SK-N-SH (cell line): ENCODE measurements at regions of chr17 and their contacts with region 1.

Region 1: GRCh38 chr17:74176546-74177001 is 26.9 kb upstream of the RPL38 start:
- DNase-seq: peak; percentile 91
- H3K4me3 ChIP-seq: peak overlapping the region in 1 of 2 experiments; percentile 18; a peak in 1 of 4 replicates
- H3K27ac ChIP-seq: no peak overlapping the region
- H3K4me1 ChIP-seq: peaks cover 0 to 10% of the 10 kb centered on the region in 2 experiments; a peak in 1 of 4 replicates
- H3K27me3 ChIP-seq: no peaks in the 10 kb centered on the region
- CTCF ChIP-seq: peak; percentile 94
- EP300 ChIP-seq: no peak
- RAD21 ChIP-seq: peak; percentile 100

Region 2: DNA sequence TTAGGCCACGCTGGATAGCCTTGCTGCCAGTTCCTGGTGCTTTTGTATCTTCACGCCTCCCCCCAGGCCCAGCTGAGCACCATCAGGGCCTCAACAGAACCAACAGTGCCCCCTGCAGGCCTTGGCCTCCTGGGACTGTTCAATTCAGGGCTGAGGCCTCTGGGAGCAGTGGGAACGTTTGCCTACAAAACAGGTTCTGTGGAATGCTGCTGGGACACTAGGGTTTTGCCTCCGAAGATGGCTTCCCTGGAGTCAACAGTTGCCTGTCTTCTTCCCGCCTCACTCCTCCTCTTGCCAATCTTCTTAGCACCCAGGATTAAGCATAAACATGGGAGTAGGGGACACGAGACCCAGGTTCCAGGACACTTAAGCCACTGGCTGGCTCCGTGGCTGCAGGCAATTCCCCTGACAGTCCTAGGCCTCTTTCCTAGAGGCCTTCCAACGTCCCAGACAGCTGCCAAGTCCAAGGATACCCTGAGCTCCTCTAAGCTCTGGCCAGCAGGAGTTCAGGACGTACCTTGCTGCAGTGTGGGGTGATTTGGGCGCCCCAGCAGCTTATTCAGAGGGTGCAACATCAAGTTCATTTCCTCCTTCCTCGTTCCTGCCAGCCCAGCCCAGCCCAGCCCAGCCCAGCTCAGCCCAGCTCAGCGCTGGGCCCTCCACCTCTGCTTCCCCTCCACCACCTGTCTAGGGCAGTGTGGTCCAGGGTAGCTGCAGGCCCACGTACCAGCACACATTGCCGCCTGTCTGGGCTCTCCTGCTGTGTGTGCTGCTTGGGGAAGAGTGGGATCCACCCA is 219.7 kb before region 1 on chr17:
- CTCF ChIA-PET with region 1: interaction called, 18 read pairs
- POLR2A ChIA-PET with region 1: no interaction called
- DNase-seq: peak; percentile 89
- H3K4me3 ChIP-seq: no peak overlapping the region
- H3K27ac ChIP-seq: no peak overlapping the region
- H3K4me1 ChIP-seq: peaks cover 0 to 6% of the 10 kb centered on the region in 2 experiments; a peak in 1 of 4 replicates
- H3K27me3 ChIP-seq: no peaks in the 10 kb centered on the region
- CTCF ChIP-seq: no peak; the same call in 1 of the 2 replicates
- EP300 ChIP-seq: no peak
- RAD21 ChIP-seq: peak; percentile 82

Region 3: GRCh38 chr17:74008196-74008595 is 168.4 kb before region 1 on chr17:
- CTCF ChIA-PET with region 1: interaction called, 15 read pairs
- POLR2A ChIA-PET with region 1: interaction called, 3 read pairs
- DNase-seq: peak; percentile 75
- H3K4me3 ChIP-seq: no peak overlapping the region
- H3K27ac ChIP-seq: no peak overlapping the region
- H3K4me1 ChIP-seq: peaks cover 0 to 22% of the 10 kb centered on the region in 2 experiments; a peak in 1 of 4 replicates
- H3K27me3 ChIP-seq: no peaks in the 10 kb centered on the region
- CTCF ChIP-seq: no peak
- EP300 ChIP-seq: no peak
- RAD21 ChIP-seq: peak; percentile 53

Region 4: DNA sequence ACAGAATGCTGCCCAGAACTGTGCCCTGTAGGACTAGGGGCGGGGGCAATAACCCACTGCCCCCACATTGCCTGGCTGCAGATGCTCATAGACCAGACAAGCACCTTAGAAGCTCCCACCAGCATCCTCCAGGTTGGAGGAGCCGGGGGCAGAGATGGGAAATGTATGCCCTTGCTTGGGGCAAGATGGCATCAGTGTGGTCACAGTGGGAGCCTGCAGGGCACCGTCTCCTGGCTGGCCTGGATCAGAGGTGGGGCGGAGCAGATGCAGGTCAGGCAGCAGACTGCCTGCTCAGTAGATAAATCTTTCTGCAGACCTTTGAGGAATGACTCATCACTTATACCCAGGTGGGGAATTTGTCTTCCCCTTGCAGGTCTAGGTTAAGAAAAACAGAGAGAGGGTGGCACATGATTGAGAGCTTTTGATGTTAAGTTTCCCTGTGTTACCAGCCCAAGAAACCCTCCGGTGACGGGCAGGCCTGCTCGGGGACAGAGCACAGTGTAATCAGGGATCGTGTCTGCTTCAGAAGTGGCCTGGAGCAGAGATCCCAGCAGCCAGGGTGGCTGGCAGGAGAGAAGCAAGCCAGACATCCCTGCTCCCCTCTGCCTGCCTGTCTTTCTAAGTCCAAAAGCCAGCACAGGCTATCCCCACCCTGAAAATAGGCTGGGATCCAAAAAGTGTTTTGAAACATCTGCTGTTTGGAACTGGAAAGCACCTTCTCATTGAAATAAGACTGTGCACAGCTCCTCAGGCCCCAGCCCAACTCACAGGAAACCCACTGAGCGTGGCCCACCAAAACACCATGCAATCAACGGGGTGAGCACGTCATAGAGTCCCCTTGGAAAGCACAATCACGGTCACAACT is 23.8 kb before region 1 on chr17:
- CTCF ChIA-PET with region 1: interaction called, 11 read pairs
- POLR2A ChIA-PET with region 1: interaction called, 3 read pairs
- DNase-seq: peak; percentile 91
- H3K4me3 ChIP-seq: no peak overlapping the region
- H3K27ac ChIP-seq: peak overlapping the region in 1 of 2 experiments; percentile 96; a peak in 2 of 4 replicates
- H3K4me1 ChIP-seq: peaks cover 0 to 37% of the 10 kb centered on the region in 2 experiments; a peak in 2 of 4 replicates
- H3K27me3 ChIP-seq: no peaks in the 10 kb centered on the region
- CTCF ChIP-seq: no peak
- EP300 ChIP-seq: peak in 1 of 2 experiments; percentile 90; a peak in 2 of 4 replicates
- RAD21 ChIP-seq: peak; percentile 38

Region 5: DNA sequence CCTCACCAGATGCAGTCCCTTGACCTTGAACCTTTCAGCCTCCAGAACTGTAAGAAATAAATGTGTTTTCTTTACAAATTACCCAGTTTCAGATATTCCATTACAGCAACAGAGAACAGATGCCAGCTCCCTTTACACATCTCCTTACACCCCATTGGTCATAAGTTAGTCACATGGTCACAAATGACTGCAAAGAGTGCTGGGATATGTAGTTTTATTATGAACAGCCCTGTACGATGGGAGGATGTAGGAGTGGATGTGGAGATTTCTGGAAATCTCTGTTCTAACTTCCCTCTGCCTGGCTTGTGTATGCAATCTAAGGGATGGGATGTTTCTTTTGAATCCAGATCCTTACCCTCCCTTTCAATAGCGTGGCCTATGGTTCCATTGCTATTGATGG is 13.6 kb after region 1 on chr17:
- CTCF ChIA-PET with region 1: interaction called, 30 read pairs
- POLR2A ChIA-PET with region 1: no interaction called
- DNase-seq: peak; percentile 90
- H3K4me3 ChIP-seq: no peak overlapping the region
- H3K27ac ChIP-seq: no peak overlapping the region
- H3K4me1 ChIP-seq: peaks cover 0 to 9% of the 10 kb centered on the region in 2 experiments; a peak in 1 of 4 replicates
- H3K27me3 ChIP-seq: peaks cover 12% of the 10 kb centered on the region
- CTCF ChIP-seq: no peak
- EP300 ChIP-seq: no peak
- RAD21 ChIP-seq: no peak

Region 6: DNA sequence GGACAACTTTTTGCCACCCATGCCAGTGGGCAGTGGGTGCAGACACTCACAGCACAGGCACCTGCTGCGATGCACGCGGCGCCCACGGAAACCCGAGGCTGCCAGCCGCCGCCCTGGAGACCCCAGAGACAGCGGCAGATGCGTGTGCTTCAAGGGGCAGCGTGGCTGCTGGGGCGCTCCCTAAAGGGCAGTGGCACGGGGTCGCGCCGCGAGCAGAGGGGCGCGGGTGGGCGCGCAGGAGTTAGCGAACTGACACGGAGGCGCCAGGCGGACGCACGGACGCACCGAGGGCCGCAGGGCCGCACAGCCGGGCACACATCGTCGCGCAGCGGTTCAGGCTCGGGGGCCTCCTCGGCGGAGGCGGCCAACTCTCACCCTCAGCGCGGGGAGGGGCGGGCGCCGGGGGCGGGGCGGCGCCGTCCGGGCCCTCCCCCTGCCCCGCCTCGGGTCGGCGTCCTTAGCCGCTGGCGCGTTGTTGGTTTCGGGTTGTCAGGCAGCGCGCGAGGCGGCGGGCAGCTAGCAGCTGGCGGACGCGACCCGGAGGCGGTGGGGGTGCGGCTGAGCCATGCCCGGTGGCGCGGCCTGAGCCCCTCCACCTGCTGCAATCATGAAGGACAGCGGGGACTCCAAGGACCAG is 149.3 kb after region 1 on chr17 and contains the start of gene KIF19:
- CTCF ChIA-PET with region 1: no interaction called
- POLR2A ChIA-PET with region 1: no interaction called
- DNase-seq: peak; percentile 91
- H3K4me3 ChIP-seq: peak within 1 kb of the TSS in 1 of 2 experiments; percentile 12; a peak in 1 of 4 replicates
- H3K27ac ChIP-seq: no peak within 1 kb of the TSS
- H3K4me1 ChIP-seq: peaks cover 0 to 3% of the 10 kb centered on the region in 2 experiments; a peak in 1 of 4 replicates
- H3K27me3 ChIP-seq: no peaks in the 10 kb centered on the region
- CTCF ChIP-seq: no peak
- EP300 ChIP-seq: no peak
- RAD21 ChIP-seq: no peak
- polyA plus RNA-seq, gene KIF19: not detected in 2 replicates

Region 7: DNA sequence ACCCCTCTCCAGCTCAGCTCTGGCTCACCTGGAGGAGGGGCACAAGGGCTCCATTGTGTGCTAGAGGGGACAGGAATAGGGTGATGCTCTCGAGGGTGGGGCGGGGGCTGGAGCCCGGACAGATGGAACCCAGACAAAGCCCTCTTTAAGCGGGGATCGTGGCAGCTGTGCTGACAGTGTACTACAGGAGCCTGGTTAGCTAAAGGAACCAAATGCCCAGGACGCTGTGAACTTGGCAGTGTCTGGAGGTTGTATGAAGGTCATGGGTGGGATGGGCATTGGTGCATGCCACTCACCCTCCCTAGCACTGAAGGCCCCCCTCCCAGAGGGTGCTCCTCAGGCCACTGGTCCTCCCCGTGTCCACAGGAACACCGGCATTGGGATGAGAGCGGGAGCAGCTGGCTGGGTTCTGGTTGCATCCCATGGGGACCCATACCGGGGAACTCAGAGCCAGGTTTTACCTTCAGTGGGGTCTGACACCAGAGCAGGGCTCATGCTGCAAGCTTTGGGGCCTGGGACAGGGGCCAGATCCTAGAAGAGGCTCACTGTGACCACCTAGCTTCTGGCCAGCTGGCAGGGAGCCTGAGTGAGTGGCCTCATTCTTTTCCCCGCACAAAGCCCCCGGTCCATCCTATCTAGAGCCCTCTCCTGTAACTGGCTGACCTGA is 161.4 kb after region 1 on chr17:
- CTCF ChIA-PET with region 1: no interaction called
- POLR2A ChIA-PET with region 1: no interaction called
- DNase-seq: peak; percentile 36
- H3K4me3 ChIP-seq: no peak overlapping the region
- H3K27ac ChIP-seq: no peak overlapping the region
- H3K4me1 ChIP-seq: no peaks in the 10 kb centered on the region
- H3K27me3 ChIP-seq: no peaks in the 10 kb centered on the region
- CTCF ChIP-seq: no peak
- EP300 ChIP-seq: no peak
- RAD21 ChIP-seq: no peak

Region 8: DNA sequence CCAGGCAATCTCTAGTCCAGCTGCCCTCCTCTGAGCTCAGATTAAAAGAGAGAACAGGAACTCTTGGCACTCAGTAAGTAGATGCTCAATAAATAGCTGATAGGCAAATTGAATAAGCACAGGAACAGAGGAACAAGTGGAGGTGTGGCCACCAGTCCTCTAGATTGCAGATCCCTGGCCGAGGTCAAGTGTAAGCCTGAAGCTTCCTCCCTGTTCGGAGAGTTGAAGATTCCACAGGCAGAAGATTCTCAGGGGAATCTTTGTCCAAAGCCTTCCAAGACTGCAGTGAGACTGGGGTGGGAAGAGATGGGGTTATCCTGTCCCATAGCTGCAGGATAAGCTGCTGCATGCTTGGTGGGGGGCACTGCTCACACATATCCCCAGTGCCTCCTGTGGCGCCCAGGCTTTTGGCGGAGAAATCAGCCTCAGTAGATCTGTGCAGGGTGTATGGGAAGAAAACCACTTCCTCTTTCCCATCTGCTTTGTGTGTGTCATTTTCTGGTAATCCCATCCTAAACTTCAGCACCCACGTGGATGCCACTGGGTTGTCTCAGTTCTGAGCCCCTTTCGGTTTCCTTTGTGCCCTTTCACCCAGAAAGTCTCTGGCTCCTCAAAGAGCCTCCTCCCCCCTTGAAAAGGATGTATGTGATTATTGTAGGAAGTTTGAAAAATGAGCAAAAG is 302.0 kb after region 1 on chr17:
- CTCF ChIA-PET with region 1: no interaction called
- POLR2A ChIA-PET with region 1: no interaction called
- DNase-seq: peak; percentile 12
- H3K4me3 ChIP-seq: no peak overlapping the region
- H3K27ac ChIP-seq: no peak overlapping the region
- H3K4me1 ChIP-seq: no peaks in the 10 kb centered on the region
- H3K27me3 ChIP-seq: no peaks in the 10 kb centered on the region
- CTCF ChIP-seq: no peak
- EP300 ChIP-seq: no peak
- RAD21 ChIP-seq: no peak